HCT116 (cell line): ENCODE measurements at regions of chr11 and their contacts with region 1.

Region 1: DNA sequence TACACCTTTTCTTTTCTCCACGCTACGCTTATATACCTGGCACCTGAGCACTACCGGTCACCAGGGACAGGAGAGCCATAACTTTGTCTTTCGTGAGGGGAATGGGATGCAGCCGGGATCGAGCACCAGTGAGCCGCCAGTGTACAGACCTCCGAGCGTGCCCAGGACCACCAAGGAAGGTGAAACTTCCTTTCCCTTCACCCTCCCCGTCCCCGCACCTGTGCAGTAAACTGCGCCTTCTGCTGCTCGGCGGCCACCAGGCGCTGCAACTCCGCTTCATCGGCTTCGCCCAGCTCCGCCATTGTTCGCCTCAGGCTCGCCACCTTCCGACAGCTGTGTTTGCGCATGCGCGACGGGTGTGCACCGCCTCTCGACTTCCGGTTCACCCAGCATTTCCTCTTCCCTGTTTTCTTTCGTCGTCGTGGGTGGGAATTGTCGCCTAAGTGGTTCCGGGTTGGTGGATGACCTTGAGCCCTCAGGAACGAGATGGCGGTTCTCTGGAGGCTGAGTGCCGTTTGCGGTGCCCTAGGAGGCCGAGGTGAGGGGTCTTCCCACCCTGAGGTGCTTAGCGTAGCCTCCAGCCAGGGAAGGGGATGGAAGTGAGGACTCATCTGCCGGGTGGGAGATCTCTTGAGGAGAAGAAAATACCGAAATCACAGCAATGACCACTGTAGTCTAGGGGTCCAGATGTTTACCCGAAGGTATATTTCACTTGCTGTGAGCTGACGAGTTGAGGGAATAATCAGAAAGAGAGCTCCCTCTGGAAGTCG is at the starts of genes SDHD and TIMM8B:
- DNase-seq: peak; percentile 95
- ATAC-seq: peak; percentile 92
- H3K4me3 ChIP-seq: peak within 1 kb of the TSS; percentile 87 to 93
- H3K27ac ChIP-seq: peak within 1 kb of the TSS; percentile 65
- H3K4me1 ChIP-seq: peaks cover 0 to 15% of the 10 kb centered on the region in 2 experiments; a peak in 2 of 4 replicates
- H3K27me3 ChIP-seq: no peaks in the 10 kb centered on the region
- CTCF ChIP-seq: no peak
- POLR2A ChIP-seq: peak; percentile 90
- RAD21 ChIP-seq: no peak
- total RNA-seq, gene SDHD: 129 TPM
- total RNA-seq, gene TIMM8B: 62.1 TPM

Region 2: DNA sequence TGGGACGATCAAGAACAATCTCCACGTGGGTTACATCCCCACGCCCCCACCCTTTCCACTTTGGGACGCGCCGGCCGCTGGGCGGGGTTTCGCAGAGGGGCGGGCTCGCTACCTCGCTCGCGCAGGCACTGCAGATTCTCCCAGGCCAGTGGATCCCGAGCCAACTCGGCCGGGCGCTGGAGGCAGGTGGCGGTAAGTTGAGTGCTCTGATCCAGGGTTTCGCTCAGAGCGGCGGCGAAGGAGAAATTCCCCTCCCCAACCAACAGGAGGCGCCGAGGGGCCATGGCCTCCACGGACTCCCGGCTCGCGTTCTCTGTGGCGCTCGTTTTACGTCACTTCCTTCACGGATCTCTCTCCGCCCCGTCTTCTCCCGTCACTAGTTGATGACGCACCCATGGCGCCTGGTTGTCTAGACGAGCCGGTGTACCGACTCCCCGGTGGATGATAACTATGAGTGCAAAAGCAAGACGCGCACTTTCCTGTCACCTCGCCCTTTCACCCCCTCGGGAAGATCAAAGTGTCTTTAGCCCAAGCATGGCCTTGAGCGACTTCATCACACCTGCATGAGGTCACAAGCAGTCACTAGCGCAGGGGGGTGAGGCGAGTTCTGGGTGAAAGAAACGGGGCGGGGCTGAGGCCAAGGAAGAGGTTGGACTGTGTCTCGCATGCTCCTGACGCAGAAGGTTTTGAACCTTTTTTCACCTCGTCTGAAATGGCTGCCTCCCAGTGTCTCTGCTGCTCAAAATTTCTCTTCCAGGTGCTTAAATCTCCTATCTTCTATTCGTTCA is 207.6 kb before region 1 on chr11 and contains the starts of genes CFAP68 and FDXACB1:
- CTCF ChIA-PET with region 1: no interaction called
- POLR2A ChIA-PET with region 1: no interaction called
- RAD21 ChIA-PET with region 1: no interaction called
- intact Hi-C with region 1: loop called (anchors 2 kb)
- DNase-seq: peak; percentile 98
- ATAC-seq: peak; percentile 85
- H3K4me3 ChIP-seq: peak within 1 kb of the TSS; percentile 83 to 91
- H3K27ac ChIP-seq: peak within 1 kb of the TSS; percentile 65
- H3K4me1 ChIP-seq: peaks cover 3 to 15% of the 10 kb centered on the region in 2 experiments; a peak in 3 of 4 replicates
- H3K27me3 ChIP-seq: no peaks in the 10 kb centered on the region
- CTCF ChIP-seq: peak; percentile 78 to 91 (median 87)
- POLR2A ChIP-seq: peak; percentile 74
- RAD21 ChIP-seq: peak; percentile 91
- total RNA-seq, gene CFAP68: 49.6 TPM
- total RNA-seq, gene FDXACB1: 3.8 TPM

Region 3: GRCh38 chr11:111933872-111934271 is 152.7 kb before region 1 on chr11:
- CTCF ChIA-PET with region 1: no interaction called
- POLR2A ChIA-PET with region 1: no interaction called
- RAD21 ChIA-PET with region 1: no interaction called
- intact Hi-C with region 1: loop called (anchors 5 kb)
- DNase-seq: no peak
- ATAC-seq: no peak
- H3K4me3 ChIP-seq: no peak overlapping the region
- H3K27ac ChIP-seq: no peak overlapping the region
- H3K4me1 ChIP-seq: peaks cover 18 to 31% of the 10 kb centered on the region in 2 experiments; a peak in 3 of 4 replicates
- H3K27me3 ChIP-seq: no peaks in the 10 kb centered on the region
- CTCF ChIP-seq: no peak
- POLR2A ChIP-seq: no peak
- RAD21 ChIP-seq: no peak

Region 4: DNA sequence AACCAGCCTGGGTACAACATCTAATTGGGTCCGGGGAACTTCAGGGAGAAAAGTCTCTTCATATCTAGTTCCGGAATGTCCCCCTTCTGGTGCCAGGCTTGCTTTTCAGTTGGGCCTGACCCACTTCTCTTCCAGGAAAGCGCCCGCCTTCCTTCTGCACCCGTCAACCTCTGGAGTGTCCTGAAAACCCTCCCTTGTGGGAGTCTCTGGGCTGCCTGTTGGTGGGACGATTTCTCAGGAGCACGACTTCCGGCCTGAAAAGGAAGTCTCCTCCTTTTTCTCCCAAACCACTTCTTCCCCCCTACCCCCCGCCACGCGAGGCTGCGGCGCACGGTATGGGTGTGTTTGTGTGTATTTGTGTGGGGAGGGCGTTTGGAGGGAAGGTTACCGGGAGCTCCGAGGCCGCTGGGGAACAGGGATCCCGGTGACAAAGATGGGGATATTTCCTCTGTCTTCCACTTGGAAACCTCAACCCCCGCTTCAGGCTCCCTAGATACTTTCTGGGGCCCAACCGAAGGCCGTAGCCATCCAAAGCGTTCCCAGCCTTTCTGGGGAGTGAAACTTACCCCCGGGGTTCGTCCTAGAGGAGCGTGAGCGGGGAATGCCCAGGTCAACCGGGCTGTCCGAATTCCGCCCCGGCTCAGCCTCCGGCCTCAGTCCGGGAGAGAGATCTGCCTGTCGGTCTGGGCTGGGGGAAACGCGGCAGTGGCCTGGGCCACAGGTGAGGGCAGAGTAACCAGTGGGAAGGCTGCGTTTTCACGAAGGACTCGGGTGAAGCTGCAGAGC is 12.4 kb before region 1 on chr11 and contains the start of gene NKAPD1:
- CTCF ChIA-PET with region 1: no interaction called
- POLR2A ChIA-PET with region 1: no interaction called
- RAD21 ChIA-PET with region 1: no interaction called
- intact Hi-C with region 1: loop called (anchors 1 kb)
- DNase-seq: peak; percentile 83
- ATAC-seq: peak; percentile 88
- H3K4me3 ChIP-seq: peak within 1 kb of the TSS; percentile 83 to 98
- H3K27ac ChIP-seq: peak within 1 kb of the TSS; percentile 69
- H3K4me1 ChIP-seq: peaks cover 0 to 14% of the 10 kb centered on the region in 2 experiments; a peak in 3 of 4 replicates
- H3K27me3 ChIP-seq: no peaks in the 10 kb centered on the region
- CTCF ChIP-seq: 0 out of 6 replicates have a peak, but pooled peaks of 1 of the 3 experiments have one; percentile 9
- POLR2A ChIP-seq: peak; percentile 61
- RAD21 ChIP-seq: no peak
- total RNA-seq, gene NKAPD1: 19.4 TPM

Region 5: GRCh38 chr11:112280268-112281126 is 193.9 kb after region 1 on chr11:
- CTCF ChIA-PET with region 1: interaction called, 3 read pairs
- POLR2A ChIA-PET with region 1: no interaction called
- RAD21 ChIA-PET with region 1: no interaction called
- intact Hi-C with region 1: loop called (anchors 5 kb)
- DNase-seq: peak; percentile 65
- ATAC-seq: peak; percentile 87
- H3K4me3 ChIP-seq: no peak overlapping the region
- H3K27ac ChIP-seq: no peak overlapping the region
- H3K4me1 ChIP-seq: peaks cover 0 to 5% of the 10 kb centered on the region in 2 experiments; a peak in 2 of 4 replicates
- H3K27me3 ChIP-seq: no peaks in the 10 kb centered on the region
- CTCF ChIP-seq: peak; percentile 74 to 77 (median 74); a peak in 5 of 6 replicates
- POLR2A ChIP-seq: no peak
- RAD21 ChIP-seq: peak; percentile 75